ENCODE measurements at regions of chr10 and their contacts with region 1.

Region 1: DNA sequence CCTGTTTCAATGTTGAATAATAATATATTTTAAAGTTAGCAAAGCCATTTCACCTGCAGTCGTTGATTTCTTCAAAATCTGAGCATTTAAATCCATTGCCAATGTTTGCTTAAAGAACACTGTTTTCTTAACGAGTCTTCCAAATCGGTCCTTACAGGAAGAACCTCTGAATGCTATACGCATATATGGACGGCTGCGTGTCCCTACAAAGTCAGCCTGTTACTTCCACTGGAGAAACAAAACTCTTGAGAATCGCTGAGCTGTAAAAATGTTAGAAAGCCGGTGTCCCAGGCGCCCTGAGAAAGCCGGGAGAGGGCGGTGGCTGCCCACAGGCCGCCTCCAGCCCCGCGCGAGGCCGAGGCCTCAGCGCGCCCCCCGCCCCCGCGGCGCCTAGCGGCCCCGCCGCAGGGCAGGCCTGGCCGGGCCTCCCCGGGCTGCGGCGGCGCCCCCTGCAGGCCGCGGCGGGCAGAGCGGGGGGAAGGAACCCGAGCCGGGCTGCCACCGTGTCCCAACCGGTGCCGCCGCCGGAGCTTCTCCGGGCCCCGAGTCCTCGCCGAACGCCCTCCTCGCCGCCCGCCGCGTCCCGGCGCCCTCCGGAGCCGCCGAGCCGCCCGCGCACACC is at the start of gene FHIP2A:
- DNase-seq: peak; percentile 86
- H3K4me3 Mint-ChIP-seq: peak within 1 kb of the TSS; percentile 82
- H3K27ac Mint-ChIP-seq: peak within 1 kb of the TSS; percentile 86
- H3K4me1 Mint-ChIP-seq: peaks cover 31% of the 10 kb centered on the region
- H3K27me3 Mint-ChIP-seq: no peaks in the 10 kb centered on the region
- total RNA-seq, gene FHIP2A: 17.2 to 21.4 TPM

Region 2: GRCh38 chr10:114499630-114500190 is 321.7 kb before region 1 on chr10:
- CTCF ChIA-PET with region 1: no interaction called
- POLR2A ChIA-PET with region 1: no interaction called
- intact Hi-C with region 1: loop called (anchors 2 kb)
- DNase-seq: peak; percentile 92
- H3K4me3 Mint-ChIP-seq: peak overlapping the region; percentile 63
- H3K27ac Mint-ChIP-seq: peak overlapping the region; percentile 89
- H3K4me1 Mint-ChIP-seq: peaks cover 89% of the 10 kb centered on the region
- H3K27me3 Mint-ChIP-seq: no peaks in the 10 kb centered on the region

Region 3: DNA sequence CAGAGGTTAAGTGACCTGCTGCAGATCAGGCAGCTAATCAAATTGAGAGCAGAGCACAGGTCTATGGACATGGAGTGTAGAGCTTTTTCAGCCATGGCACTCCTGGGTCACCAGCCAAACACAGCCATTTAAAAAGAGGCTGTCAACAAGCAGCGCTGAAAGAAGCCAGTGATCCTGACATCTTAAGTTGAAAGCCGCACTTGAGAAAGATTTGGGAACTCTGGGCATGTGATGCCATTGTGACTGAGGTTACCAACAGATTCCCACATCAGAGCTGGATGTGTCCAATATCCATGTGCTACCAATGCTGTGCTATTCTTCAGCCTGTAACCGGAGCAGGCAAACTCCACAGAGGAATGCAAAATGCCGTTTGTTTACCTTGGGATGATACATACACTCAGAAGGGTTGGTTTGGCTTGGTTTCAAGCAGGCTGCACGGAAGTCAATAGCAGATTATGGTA is 107.1 kb before region 1 on chr10:
- CTCF ChIA-PET with region 1: no interaction called
- POLR2A ChIA-PET with region 1: no interaction called
- intact Hi-C with region 1: no loop called
- DNase-seq: no peak
- H3K4me3 Mint-ChIP-seq: no peak overlapping the region
- H3K27ac Mint-ChIP-seq: no peak overlapping the region
- H3K4me1 Mint-ChIP-seq: no peaks in the 10 kb centered on the region
- H3K27me3 Mint-ChIP-seq: peaks cover 7% of the 10 kb centered on the region

Region 4: GRCh38 chr10:114801411-114801813 is 20.0 kb before region 1 on chr10:
- CTCF ChIA-PET with region 1: interaction called, 9 read pairs
- POLR2A ChIA-PET with region 1: interaction called, 4 read pairs
- intact Hi-C with region 1: loop called (anchors 1 kb)
- DNase-seq: peak; percentile 42
- H3K4me3 Mint-ChIP-seq: no peak overlapping the region
- H3K27ac Mint-ChIP-seq: no peak overlapping the region
- H3K4me1 Mint-ChIP-seq: peaks cover 17% of the 10 kb centered on the region
- H3K27me3 Mint-ChIP-seq: no peaks in the 10 kb centered on the region

Region 5: DNA sequence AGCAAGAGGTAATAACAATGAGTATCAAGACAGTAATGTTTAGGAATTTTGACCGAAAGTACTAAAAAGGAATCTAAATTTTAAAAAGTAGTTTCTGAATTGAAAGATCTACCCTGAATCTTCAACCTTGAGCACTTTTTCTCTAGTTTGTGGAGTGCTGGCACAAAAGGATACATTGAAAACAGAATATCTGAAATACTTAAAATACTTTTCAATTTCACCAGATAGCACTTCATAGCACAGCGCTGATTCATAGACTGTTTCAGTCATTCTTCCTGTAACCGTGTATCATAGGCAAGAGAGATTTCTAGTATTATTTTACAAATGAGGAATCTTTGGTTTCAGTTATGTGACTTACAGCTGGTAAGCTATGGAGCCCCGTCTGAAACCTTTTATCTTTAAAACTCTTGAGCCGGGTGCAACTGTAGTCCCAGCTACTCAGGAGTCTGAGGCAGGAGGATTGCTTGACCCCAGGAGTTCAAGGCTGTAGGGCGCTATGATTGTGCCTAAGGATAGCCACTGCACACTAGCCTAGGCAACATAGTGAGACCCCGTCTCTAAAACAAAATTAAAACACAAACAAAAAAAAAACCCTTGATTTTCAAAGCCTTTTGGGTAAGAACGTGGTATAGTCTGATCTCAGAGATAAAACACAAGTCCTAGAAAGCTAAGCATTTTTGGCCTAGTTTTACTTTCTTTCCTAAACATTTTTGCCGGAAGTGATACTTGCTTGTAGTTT is 35.3 kb after region 1 on chr10:
- CTCF ChIA-PET with region 1: interaction called, 9 read pairs
- POLR2A ChIA-PET with region 1: interaction called, 6 read pairs
- intact Hi-C with region 1: loop called (anchors 1 kb)
- DNase-seq: no peak
- H3K4me3 Mint-ChIP-seq: peak overlapping the region; percentile 23
- H3K27ac Mint-ChIP-seq: peak overlapping the region; percentile 44
- H3K4me1 Mint-ChIP-seq: peaks cover 25% of the 10 kb centered on the region
- H3K27me3 Mint-ChIP-seq: no peaks in the 10 kb centered on the region

Region 6: DNA sequence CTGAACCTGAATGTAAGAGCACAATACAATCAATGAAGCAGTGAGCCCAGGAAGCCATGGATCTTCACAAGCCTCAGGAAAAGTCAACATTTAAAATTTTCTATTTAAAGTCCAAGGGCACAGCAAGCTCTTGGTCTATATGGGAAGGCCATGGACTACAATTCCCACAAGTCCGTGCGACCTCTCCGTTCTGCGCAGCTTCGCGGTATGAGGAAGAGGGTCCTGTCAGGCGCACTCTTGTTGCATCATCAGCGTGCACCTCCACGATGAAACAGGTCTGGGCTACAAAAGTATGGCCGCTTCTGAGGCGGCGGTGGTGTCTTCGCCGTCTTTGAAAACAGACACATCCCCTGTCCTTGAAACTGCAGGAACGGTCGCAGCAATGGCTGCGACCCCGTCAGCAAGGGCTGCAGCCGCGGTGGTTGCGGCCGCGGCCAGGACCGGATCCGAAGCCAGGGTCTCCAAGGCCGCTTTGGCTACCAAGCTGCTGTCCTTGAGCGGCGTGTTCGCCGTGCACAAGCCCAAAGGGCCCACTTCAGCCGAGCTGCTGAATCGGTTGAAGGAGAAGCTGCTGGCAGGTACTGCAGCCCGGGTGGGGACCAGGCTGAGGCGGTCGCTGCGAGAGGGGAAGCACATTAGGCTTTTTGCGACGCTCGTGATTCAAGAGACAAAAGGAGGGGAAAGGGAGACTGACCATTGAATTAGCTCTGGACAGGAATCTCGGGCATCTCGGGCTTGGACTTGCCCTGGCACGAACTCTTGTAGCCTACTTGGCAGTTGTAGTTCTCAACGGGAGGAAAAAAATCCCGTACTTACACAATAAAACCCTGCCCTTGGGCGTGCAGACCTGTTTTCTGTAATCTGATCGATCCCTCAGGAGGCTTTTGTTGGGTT is 116.8 kb after region 1 on chr10 and contains the start of gene TRUB1:
- CTCF ChIA-PET with region 1: interaction called, 3 read pairs
- POLR2A ChIA-PET with region 1: no interaction called
- intact Hi-C with region 1: loop called (anchors 1 kb)
- DNase-seq: peak; percentile 94
- H3K4me3 Mint-ChIP-seq: peak within 1 kb of the TSS; percentile 96
- H3K27ac Mint-ChIP-seq: peak within 1 kb of the TSS; percentile 80
- H3K4me1 Mint-ChIP-seq: peaks cover 28% of the 10 kb centered on the region
- H3K27me3 Mint-ChIP-seq: no peaks in the 10 kb centered on the region
- total RNA-seq, gene TRUB1: 13.4 to 16.2 TPM